Left lung (tissue), 14 donors: ENCODE measurements at regions of chr5 and their contacts with region 1.

Region 1: DNA sequence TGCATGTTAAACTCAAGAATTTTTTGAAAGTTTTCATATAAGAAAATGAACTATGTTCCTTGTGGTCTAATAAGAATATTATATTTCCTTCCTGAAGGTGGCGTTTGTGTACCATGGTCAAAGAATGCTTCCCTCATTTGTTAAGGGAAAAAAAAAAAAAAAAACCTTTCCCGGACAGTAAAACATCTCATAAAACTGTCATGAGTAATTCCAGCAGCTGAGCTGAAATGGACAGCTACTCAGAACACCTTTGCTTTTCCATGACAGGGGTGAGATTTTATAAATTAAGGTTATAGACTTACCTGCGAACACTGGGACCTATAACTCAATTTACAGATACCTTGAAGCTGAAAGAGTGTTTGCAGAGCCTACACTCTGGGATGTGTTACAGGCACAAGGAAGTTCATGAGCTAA is 113.2 kb upstream of the RANBP3L start:
- DNase-seq: peak in 1 of 4 donors; percentile 51
- ATAC-seq: peak; percentile 71
- H3K4me3 ChIP-seq: no peak overlapping the region
- H3K27ac ChIP-seq: no peak overlapping the region
- H3K4me1 ChIP-seq: no peaks in the 10 kb centered on the region
- H3K27me3 ChIP-seq: no peaks in the 10 kb centered on the region
- CTCF ChIP-seq: peak in 1 of 2 donors; percentile 32

Region 2: GRCh38 chr5:36096486-36096885 is 318.4 kb before region 1 on chr5:
- intact Hi-C with region 1: no loop called
- DNase-seq: no peak
- ATAC-seq: no peak
- H3K4me3 ChIP-seq: no peak overlapping the region
- H3K27ac ChIP-seq: no peak overlapping the region
- H3K4me1 ChIP-seq: no peaks in the 10 kb centered on the region
- H3K27me3 ChIP-seq: no peaks in the 10 kb centered on the region
- CTCF ChIP-seq: no peak

Region 3: GRCh38 chr5:36346896-36347690 is 67.8 kb before region 1 on chr5:
- intact Hi-C with region 1: no loop called
- DNase-seq: peak in 1 of 4 donors; percentile 29
- ATAC-seq: no peak
- H3K4me3 ChIP-seq: no peak overlapping the region
- H3K27ac ChIP-seq: no peak overlapping the region
- H3K4me1 ChIP-seq: no peaks in the 10 kb centered on the region
- H3K27me3 ChIP-seq: no peaks in the 10 kb centered on the region
- CTCF ChIP-seq: no peak

Region 4: DNA sequence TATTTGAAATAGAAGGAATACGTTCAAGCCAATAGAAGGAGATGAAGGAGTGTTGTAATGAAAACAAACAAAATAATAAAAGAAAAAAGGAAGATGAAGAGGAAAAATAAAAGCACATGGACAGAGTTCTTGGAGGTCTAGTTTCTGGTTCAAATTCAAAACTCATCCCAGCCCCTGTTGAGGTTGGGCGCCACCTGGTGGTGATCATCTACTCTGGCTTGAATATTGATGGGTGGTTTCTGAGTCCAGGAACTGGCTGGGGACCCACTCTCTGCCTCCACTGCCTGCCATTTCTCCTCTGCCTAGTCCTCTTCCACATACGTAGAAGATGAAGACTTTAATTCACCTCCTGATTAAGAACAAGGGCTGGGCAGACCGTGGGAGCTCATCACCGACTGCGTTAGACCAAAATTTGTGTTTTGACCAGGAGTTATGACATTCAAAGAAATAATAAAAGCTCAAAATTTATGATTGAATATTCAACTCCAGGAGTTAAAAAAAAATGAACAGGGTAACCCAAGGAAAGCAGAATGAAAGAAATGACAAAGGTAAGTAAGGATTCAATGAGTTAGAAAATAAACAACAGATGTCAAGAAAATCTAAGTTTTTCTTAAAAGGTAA is 92.6 kb after region 1 on chr5:
- intact Hi-C with region 1: loop called in 1 of 2 experiments (anchors 10 kb)
- DNase-seq: peak in 3 of 4 donors; percentile 55 to 86 (median 70)
- ATAC-seq: peak; percentile 92
- H3K4me3 ChIP-seq: no peak overlapping the region
- H3K27ac ChIP-seq: no peak overlapping the region
- H3K4me1 ChIP-seq: no peaks in the 10 kb centered on the region
- H3K27me3 ChIP-seq: no peaks in the 10 kb centered on the region
- CTCF ChIP-seq: peak; percentile 70 to 85

Region 5: DNA sequence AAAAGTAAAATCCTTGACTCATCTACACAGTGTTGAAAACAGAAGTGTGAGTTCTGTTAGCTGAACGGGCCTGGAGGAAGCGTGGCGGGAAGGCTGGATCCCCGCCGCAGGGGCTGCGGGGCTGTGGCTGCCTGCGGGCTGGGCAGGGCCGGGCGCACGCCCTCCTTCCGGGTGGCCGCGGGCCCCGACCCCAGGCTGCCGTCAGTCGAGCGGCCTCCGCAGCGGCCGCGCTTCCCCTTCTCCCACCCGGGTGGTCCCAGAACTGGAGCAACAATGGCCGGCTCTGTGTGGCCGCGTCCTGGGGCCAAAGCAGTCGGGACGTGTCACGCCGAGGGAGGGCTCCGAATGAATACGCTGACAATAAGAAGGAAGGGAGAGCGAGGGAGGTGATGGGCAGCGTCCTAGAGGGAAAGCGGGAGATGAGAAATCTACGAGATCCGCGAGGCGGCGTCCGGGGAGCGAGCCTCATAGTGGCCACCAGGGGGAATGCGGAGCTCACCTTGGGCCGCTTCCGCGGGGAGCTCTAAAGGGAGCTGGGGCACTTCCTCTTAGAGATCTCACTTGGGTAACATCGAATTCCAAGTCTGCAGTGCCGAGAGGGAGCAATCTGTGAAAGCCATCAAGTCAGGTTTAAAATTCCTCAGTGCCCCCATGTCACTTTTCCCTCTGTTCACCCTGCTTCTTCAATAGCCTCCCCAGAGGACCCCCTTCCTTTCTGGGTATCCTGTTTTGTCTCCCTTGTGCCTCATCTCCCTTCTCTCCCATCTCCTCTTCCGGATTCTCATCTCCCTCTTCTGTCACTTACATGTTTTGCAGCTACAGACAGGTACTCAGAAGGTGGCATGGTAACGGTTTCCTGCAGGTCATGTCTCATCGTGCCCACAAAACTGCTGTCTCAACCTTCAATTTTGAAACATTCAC is 275.4 kb after region 1 on chr5:
- intact Hi-C with region 1: loop called (anchors 5 to 10 kb)
- DNase-seq: peak; percentile 68 to 96 (median 83)
- ATAC-seq: peak; percentile 83
- H3K4me3 ChIP-seq: peak overlapping the region; percentile 42 to 44
- H3K27ac ChIP-seq: peak overlapping the region; percentile 69 to 79
- H3K4me1 ChIP-seq: peaks cover 4 to 56% of the 10 kb centered on the region in 2 donors
- H3K27me3 ChIP-seq: peaks cover 0 to 27% of the 10 kb centered on the region in 2 donors
- CTCF ChIP-seq: peak; percentile 86 to 92